ENCODE measurements at regions of chr22 and their contacts with region 1.

Region 1: GRCh38 chr22:41966607-41967240 is 2.5 kb upstream of the SEPTIN3 start:
- DNase-seq: peak; percentile 75
- ATAC-seq: peak; percentile 72
- H3K4me3 ChIP-seq: no peak overlapping the region
- H3K4me3 Mint-ChIP-seq: no peak overlapping the region
- H3K27ac ChIP-seq: no peak overlapping the region
- H3K27ac Mint-ChIP-seq: no peak overlapping the region
- H3K4me1 ChIP-seq: no peaks in the 10 kb centered on the region
- H3K4me1 Mint-ChIP-seq: no peaks in the 10 kb centered on the region
- H3K27me3 ChIP-seq: peaks cover 0 to 10% (median 0%) of the 10 kb centered on the region in 4 experiments
- H3K27me3 Mint-ChIP-seq: peaks cover 8% of the 10 kb centered on the region
- CTCF ChIP-seq: peak; percentile 51

Region 2: GRCh38 chr22:41951898-41952474 is 14.7 kb before region 1 on chr22 and contains the start of gene SMIM45:
- CTCF ChIA-PET with region 1: interaction called, 10 read pairs
- POLR2A ChIA-PET with region 1: no interaction called
- intact Hi-C with region 1: no loop called
- DNase-seq: peak; percentile 79
- ATAC-seq: peak; percentile 92
- H3K4me3 ChIP-seq: no peak within 1 kb of the TSS
- H3K4me3 Mint-ChIP-seq: peak within 1 kb of the TSS; percentile 32
- H3K27ac ChIP-seq: no peak within 1 kb of the TSS
- H3K27ac Mint-ChIP-seq: peak within 1 kb of the TSS; percentile 51
- H3K4me1 ChIP-seq: peaks cover 18 to 48% of the 10 kb centered on the region in 2 donors
- H3K4me1 Mint-ChIP-seq: peaks cover 48% of the 10 kb centered on the region
- H3K27me3 ChIP-seq: no peaks in the 10 kb centered on the region
- H3K27me3 Mint-ChIP-seq: no peaks in the 10 kb centered on the region
- CTCF ChIP-seq: peak; percentile 30

Region 3: GRCh38 chr22:42114721-42115120 is 148.0 kb after region 1 on chr22:
- CTCF ChIA-PET with region 1: interaction called, 45 read pairs
- POLR2A ChIA-PET with region 1: no interaction called
- intact Hi-C with region 1: no loop called
- DNase-seq: no peak
- ATAC-seq: no peak
- H3K4me3 ChIP-seq: no peak overlapping the region
- H3K4me3 Mint-ChIP-seq: no peak overlapping the region
- H3K27ac ChIP-seq: no peak overlapping the region
- H3K27ac Mint-ChIP-seq: no peak overlapping the region
- H3K4me1 ChIP-seq: peaks cover 0 to under 1% of the 10 kb centered on the region in 2 donors
- H3K4me1 Mint-ChIP-seq: peaks cover 6% of the 10 kb centered on the region
- H3K27me3 ChIP-seq: no peaks in the 10 kb centered on the region
- H3K27me3 Mint-ChIP-seq: no peaks in the 10 kb centered on the region
- CTCF ChIP-seq: no peak

Region 4: GRCh38 chr22:42473484-42474193 is 506.9 kb after region 1 on chr22:
- CTCF ChIA-PET with region 1: interaction called, 19 read pairs
- POLR2A ChIA-PET with region 1: no interaction called
- intact Hi-C with region 1: loop called (anchors 1 kb)
- DNase-seq: peak; percentile 68
- ATAC-seq: peak; percentile 41
- H3K4me3 ChIP-seq: no peak overlapping the region
- H3K4me3 Mint-ChIP-seq: no peak overlapping the region
- H3K27ac ChIP-seq: no peak overlapping the region
- H3K27ac Mint-ChIP-seq: no peak overlapping the region
- H3K4me1 ChIP-seq: peaks cover 0 to 3% of the 10 kb centered on the region in 2 donors
- H3K4me1 Mint-ChIP-seq: peaks cover 4% of the 10 kb centered on the region
- H3K27me3 ChIP-seq: peaks cover 0 to 1% (median 0%) of the 10 kb centered on the region in 4 experiments
- H3K27me3 Mint-ChIP-seq: peaks cover 11% of the 10 kb centered on the region
- CTCF ChIP-seq: peak; percentile 78